GM18951 (cell line): ENCODE measurements at regions of chr16 and their contacts with region 1.

Region 1: GRCh38 chr16:21656795-21657768 is 4.7 kb upstream of the IGSF6 start:
- POLR2A ChIP-seq: no peak

Region 2: DNA sequence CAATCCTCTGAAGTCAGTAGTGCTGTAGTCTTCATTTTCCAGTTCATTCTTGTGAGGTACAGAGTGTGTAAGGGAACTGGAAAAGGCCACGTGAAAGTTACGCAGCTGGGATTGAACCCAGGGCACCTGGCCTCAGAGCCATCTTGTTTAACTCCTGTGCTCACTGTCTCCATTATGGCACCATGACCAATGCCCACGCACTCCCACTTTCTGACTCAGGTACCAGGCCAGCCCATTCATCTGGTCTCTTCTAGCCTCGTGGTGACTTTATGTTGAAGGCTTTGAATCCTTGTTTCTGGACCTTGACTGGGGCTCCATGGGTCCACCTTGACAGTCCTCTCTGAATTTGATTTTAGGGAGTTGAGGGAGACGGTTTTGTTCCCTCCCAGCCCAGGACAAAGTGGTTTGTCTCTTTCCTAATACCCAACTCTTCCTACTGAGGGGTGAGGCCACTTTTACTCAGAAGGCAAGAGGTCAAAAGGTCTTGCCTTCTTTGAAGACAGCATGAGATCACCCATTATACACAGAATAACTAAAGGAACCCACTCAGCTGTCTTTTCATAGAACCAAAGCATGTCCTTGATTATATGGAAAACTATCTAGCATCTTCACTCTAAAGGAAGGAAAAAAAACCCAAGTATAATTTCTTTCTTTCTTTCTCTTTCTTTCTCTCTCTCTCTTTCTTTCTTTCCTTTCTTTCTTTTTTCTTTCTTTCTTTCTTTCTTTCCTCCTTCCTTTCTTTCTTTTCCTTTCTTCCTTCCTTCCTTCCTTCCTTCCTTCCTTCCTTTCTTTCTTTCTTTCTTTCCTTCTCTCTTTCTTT is 56.7 kb after region 1 on chr16:
- in situ Hi-C with region 1: loop called (anchors 10 kb)
- POLR2A ChIP-seq: no peak